ENCODE measurements at regions of chr14 and their contacts with region 1.

Region 1: DNA sequence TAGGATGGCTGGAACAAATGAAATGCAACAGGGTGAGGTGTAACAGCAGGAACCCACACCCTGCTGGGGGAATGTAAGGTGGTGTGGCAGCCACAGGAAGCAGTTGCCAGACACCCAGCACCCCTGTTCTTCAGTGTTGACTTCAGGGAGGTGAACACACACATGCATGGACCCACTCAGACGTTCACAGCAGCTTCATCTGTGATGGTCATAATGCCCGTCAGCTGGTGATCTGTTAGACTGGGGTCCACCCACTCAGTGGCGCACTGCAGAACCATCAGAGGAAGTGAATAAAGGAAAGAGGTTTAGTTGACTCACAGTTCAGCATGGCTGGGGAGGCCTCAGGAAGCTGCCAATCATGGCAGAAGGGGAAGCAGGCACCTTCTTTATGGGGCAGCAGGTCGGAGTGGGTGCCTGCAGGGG is 22.7 kb upstream of the TEX22 start:
- DNase-seq: peak; percentile 54
- H3K4me3 ChIP-seq: no peak overlapping the region
- H3K27ac ChIP-seq: no peak overlapping the region
- H3K4me1 ChIP-seq: peaks cover 10% of the 10 kb centered on the region
- H3K27me3 ChIP-seq: no peaks in the 10 kb centered on the region
- CTCF ChIP-seq: no peak
- POLR2A ChIP-seq: no peak

Region 2: DNA sequence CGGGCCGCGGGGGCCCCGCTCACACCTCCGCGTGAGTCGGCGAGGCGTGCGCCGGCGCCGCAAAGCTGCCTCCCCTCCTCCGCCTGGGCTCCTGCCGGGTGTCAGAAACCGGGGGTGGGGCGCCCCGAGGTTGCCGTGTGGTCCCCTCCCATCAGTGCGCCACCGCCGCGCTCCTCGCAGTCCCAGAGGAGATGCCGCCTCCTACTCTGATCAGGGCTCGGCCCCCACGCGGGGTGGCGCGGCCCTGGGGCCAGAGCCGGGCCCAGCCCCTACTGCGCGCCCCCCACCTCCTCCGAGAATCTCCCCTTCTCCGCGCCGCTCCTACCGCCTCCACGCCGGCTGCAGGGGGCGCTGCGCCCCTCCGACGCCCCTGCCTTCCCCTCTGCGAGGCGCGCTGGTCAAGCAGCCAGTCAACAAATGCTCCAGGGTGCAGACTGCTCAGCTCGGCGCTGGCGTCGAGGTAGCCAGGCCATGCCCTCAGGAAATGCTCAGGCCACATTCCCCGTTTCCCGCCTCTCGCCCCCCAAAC is 206.6 kb before region 1 on chr14:
- CTCF ChIA-PET with region 1: no interaction called
- POLR2A ChIA-PET with region 1: no interaction called
- dilution Hi-C with region 1: no loop called
- intact Hi-C with region 1: no loop called
- DNase-seq: peak; percentile 81
- H3K4me3 ChIP-seq: peak overlapping the region; percentile 11 to 41 (median 16)
- H3K27ac ChIP-seq: peak overlapping the region; percentile 2
- H3K4me1 ChIP-seq: peaks cover 39% of the 10 kb centered on the region
- H3K27me3 ChIP-seq: no peaks in the 10 kb centered on the region
- CTCF ChIP-seq: peak; percentile 86 to 92
- POLR2A ChIP-seq: no peak

Region 3: DNA sequence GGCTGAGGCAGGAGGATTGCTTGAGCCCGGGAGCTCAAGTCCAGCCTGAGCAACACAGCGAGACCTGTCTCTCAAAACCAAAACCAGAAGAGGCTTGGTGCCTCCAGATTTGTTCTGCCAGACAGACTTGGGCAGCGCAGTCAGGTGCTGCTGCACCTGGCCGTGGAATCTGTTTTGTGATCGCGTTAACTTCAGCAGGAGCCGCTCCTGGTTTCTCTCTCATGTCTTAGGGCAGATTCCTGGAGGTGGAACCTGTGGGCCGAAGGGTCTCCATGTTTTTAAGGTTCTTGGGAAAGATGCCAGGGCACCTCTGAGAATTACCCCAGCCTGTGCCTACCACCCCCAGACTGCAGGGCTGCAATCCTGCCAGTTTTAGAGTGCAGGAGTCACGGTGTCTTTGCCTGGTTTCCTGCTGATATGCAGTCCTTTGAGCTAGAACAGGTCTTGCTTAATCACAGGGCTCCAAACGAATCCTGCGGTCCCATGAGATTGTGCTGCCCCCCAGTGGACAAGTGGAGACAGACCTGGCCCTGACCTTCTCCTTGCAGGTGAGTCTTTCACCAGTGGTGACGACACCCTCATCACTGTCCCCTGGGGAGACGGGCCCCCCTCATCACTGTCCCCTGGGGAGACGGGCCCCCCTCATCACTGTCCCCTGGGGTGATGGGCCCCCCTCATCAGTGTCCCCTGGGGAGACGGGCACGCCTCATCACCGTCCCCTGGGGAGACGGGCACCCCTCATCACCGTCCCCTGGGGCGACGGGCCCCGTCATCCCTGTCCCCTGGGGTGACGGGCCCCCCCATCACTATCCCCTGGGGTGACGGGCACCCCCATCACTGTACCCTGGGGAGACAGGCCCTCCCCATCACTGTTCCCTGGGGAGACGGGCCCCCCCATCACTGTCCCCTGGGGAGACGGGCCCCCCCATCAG is 23.5 kb before region 1 on chr14:
- CTCF ChIA-PET with region 1: no interaction called
- POLR2A ChIA-PET with region 1: no interaction called
- dilution Hi-C with region 1: no loop called
- intact Hi-C with region 1: no loop called
- DNase-seq: peak; percentile 89
- H3K4me3 ChIP-seq: no peak overlapping the region
- H3K27ac ChIP-seq: no peak overlapping the region
- H3K4me1 ChIP-seq: peaks cover 2% of the 10 kb centered on the region
- H3K27me3 ChIP-seq: no peaks in the 10 kb centered on the region
- CTCF ChIP-seq: peak; percentile 76 to 85
- POLR2A ChIP-seq: no peak

Region 4: GRCh38 chr14:105398044-105398725 is 22.5 kb after region 1 on chr14 and contains the start of gene TEX22:
- CTCF ChIA-PET with region 1: interaction called, 11 read pairs
- POLR2A ChIA-PET with region 1: no interaction called
- dilution Hi-C with region 1: no loop called
- intact Hi-C with region 1: no loop called
- DNase-seq: peak; percentile 79
- H3K4me3 ChIP-seq: peak within 1 kb of the TSS; percentile 51 to 67 (median 62)
- H3K27ac ChIP-seq: peak within 1 kb of the TSS; percentile 60
- H3K4me1 ChIP-seq: peaks cover 21% of the 10 kb centered on the region
- H3K27me3 ChIP-seq: no peaks in the 10 kb centered on the region
- CTCF ChIP-seq: peak in 1 of 2 donors; percentile 37
- POLR2A ChIP-seq: peak; percentile 89
- total RNA-seq, gene TEX22: 1.1 and 2.1 TPM in 2 replicates

Region 5: DNA sequence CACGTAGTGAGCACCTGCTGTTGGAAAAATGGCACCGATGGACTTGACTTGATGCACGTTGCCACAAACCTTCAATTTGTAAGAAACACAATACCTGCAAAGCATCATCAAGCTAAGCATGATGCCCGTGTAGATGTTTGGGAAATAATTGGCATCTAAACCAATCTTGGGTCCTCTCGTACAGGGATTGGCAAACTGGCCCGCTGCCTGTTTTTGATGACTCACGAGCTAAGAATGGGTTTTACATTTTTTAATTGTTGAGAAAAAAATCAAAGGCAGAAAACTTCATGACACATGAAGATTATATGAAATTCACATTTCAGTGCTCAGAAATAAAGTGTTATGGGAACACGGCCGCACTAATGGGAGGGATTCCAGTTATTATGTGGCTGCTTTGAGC is 54.9 kb after region 1 on chr14:
- CTCF ChIA-PET with region 1: interaction called, 17 read pairs
- POLR2A ChIA-PET with region 1: no interaction called
- dilution Hi-C with region 1: no loop called
- intact Hi-C with region 1: loop called (anchors 1 kb)
- DNase-seq: peak; percentile 90
- H3K4me3 ChIP-seq: no peak overlapping the region
- H3K27ac ChIP-seq: peak overlapping the region; percentile 86
- H3K4me1 ChIP-seq: peaks cover 34% of the 10 kb centered on the region
- H3K27me3 ChIP-seq: no peaks in the 10 kb centered on the region
- CTCF ChIP-seq: no peak
- POLR2A ChIP-seq: peak; percentile 20

Region 6: GRCh38 chr14:105448706-105449111 is 73.1 kb after region 1 on chr14:
- CTCF ChIA-PET with region 1: interaction called, 25 read pairs
- POLR2A ChIA-PET with region 1: no interaction called
- dilution Hi-C with region 1: no loop called
- intact Hi-C with region 1: loop called (anchors 1 kb)
- DNase-seq: peak; percentile 74
- H3K4me3 ChIP-seq: no peak overlapping the region
- H3K27ac ChIP-seq: no peak overlapping the region
- H3K4me1 ChIP-seq: no peaks in the 10 kb centered on the region
- H3K27me3 ChIP-seq: no peaks in the 10 kb centered on the region
- CTCF ChIP-seq: peak; percentile 83 to 92
- POLR2A ChIP-seq: no peak

Region 7: GRCh38 chr14:105473677-105474482 is 98.2 kb after region 1 on chr14:
- CTCF ChIA-PET with region 1: interaction called, 13 read pairs
- POLR2A ChIA-PET with region 1: no interaction called
- dilution Hi-C with region 1: no loop called
- intact Hi-C with region 1: no loop called
- DNase-seq: peak; percentile 91
- H3K4me3 ChIP-seq: peak overlapping the region; percentile 21 to 93 (median 34)
- H3K27ac ChIP-seq: peak overlapping the region; percentile 90
- H3K4me1 ChIP-seq: peaks cover 19% of the 10 kb centered on the region
- H3K27me3 ChIP-seq: no peaks in the 10 kb centered on the region
- CTCF ChIP-seq: no peak
- POLR2A ChIP-seq: no peak

Region 8: GRCh38 chr14:105527661-105528581 is 152.3 kb after region 1 on chr14:
- CTCF ChIA-PET with region 1: interaction called, 35 read pairs
- POLR2A ChIA-PET with region 1: no interaction called
- dilution Hi-C with region 1: no loop called
- intact Hi-C with region 1: loop called (anchors 1 kb)
- DNase-seq: peak; percentile 61
- H3K4me3 ChIP-seq: peak overlapping the region; percentile 26 to 63 (median 49)
- H3K27ac ChIP-seq: no peak overlapping the region
- H3K4me1 ChIP-seq: peaks cover 17% of the 10 kb centered on the region
- H3K27me3 ChIP-seq: peaks cover 6 to 7% of the 10 kb centered on the region in 2 experiments
- CTCF ChIP-seq: peak; percentile 68 to 91
- POLR2A ChIP-seq: peak; percentile 46

Measured in endothelial cell of umbilical vein (primary cell).